Activated T-helper 1 cell treated with anti-CD3 and anti-CD28 coated beads, Interleukin-12 subunit alpha, Interleukin-12 subunit beta, Interleukin-2, Interleukin-4 antibody, amounts not matched to agents 30 ng/mL and 10 ng/mL and 1 ng/mL, durations not matched to agents 14 hours and 24 hours and 36 hours (primary cell): ENCODE measurements at regions of chr4 and their contacts with region 1.

Region 1: GRCh38 chr4:145785391-145786008 is 105.6 kb downstream of the C4orf51 start:
- DNase-seq: no peak
- H3K4me3 Mint-ChIP-seq: no peak overlapping the region
- H3K27ac Mint-ChIP-seq: peak overlapping the region; percentile 72
- H3K4me1 Mint-ChIP-seq: peaks cover 49% of the 10 kb centered on the region
- H3K27me3 Mint-ChIP-seq: no peaks in the 10 kb centered on the region

Region 2: DNA sequence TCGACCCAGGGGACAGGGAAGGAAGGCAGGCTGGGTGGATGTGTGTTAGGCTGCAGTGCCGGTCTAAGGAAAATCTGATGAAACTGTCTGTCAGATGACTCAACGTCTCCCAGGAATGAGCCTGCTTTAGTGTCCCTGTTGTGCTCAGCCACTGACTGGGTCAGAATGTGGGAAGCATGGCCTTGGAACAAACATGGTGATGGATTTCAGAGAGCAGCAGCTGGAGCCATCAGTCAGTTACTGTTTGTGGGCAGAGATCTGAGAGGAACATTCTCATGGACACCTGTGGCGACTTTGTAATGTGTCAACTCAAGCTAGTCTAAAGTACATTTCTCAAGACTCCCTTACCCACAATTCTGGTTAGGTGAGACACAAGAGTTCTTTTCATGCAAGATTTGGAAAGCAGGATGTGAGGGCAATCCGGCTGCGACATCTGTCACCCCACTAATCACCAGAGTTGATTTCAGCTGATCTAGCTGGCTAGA is 750.7 kb before region 1 on chr4:
- intact Hi-C with region 1: no loop called
- DNase-seq: no peak
- H3K4me3 Mint-ChIP-seq: no peak overlapping the region
- H3K27ac Mint-ChIP-seq: no peak overlapping the region
- H3K4me1 Mint-ChIP-seq: peaks cover 13% of the 10 kb centered on the region
- H3K27me3 Mint-ChIP-seq: no peaks in the 10 kb centered on the region

Region 3: GRCh38 chr4:145815626-145816025 is 30.1 kb after region 1 on chr4:
- intact Hi-C with region 1: loop called (anchors 1 kb)
- DNase-seq: no peak
- H3K4me3 Mint-ChIP-seq: peak overlapping the region; percentile 43
- H3K27ac Mint-ChIP-seq: peak overlapping the region; percentile 86
- H3K4me1 Mint-ChIP-seq: peaks cover 51% of the 10 kb centered on the region
- H3K27me3 Mint-ChIP-seq: no peaks in the 10 kb centered on the region

Region 4: GRCh38 chr4:146486565-146486964 is 701.1 kb after region 1 on chr4:
- intact Hi-C with region 1: no loop called
- DNase-seq: no peak
- H3K4me3 Mint-ChIP-seq: no peak overlapping the region
- H3K27ac Mint-ChIP-seq: no peak overlapping the region
- H3K4me1 Mint-ChIP-seq: peaks cover 17% of the 10 kb centered on the region
- H3K27me3 Mint-ChIP-seq: no peaks in the 10 kb centered on the region